CD8-positive, alpha-beta T cell (primary cell): ENCODE measurements at regions of chr9 and their contacts with region 1.

Region 1: DNA sequence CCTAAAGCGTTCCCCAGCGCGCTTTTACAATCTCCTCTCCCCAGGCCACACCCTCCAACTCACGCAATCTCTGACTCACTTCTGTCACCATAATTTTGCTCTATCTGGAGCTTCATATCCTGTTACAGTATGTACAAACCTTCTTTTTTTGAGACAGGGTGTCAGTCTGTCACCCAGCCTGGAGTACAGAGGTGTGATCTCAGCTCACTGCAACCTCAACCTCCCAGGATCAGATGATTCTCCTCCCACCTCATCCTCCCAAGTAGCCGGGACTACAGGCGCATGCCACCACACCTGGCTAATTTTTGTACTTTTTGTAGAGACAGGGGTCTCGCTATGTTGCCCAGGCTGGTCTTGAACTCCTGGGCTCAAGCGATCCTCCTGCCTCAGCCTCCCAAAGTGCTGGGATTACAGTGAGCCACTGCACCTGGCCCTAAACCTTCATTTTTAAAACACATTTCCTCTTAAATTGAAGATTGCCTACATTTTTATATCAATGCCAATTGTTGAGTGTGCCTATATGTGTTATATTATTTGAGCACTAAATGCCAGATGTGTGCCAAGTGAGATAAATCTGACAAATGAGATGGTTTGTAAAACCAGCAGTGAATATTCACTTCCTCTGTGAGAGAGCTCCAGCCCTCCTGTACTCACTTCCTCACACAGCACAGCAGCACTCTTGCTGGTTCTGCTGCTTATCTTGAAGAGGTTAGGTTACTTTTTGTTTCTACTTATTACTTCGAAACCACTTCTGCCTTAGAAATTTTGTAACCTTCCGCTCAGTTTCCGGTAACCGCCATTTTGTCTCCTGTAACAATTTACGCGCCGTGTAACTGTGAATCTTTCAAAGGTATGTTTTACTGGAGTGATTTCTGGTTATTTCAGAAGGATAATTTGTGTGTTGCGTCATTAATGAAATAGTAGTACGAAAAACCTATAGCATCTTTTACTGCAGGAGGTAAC is 57.9 kb downstream of the DOCK8 start:
- DNase-seq: peak; percentile 52 to 94 (median 71)
- ATAC-seq: peak; percentile 85
- H3K4me3 ChIP-seq: peak overlapping the region; percentile 59 to 70
- H3K4me3 Mint-ChIP-seq: peak overlapping the region; percentile 91
- H3K27ac ChIP-seq: peak overlapping the region; percentile 84 to 94
- H3K27ac Mint-ChIP-seq: peak overlapping the region; percentile 99
- H3K4me1 ChIP-seq: peaks cover 44% of the 10 kb centered on the region
- H3K4me1 Mint-ChIP-seq: peaks cover 55% of the 10 kb centered on the region
- H3K27me3 ChIP-seq: no peaks in the 10 kb centered on the region
- H3K27me3 Mint-ChIP-seq: no peaks in the 10 kb centered on the region
- CTCF ChIP-seq: no peak

Region 2: GRCh38 chr9:214648-215493 is 57.7 kb before region 1 on chr9 and contains the start of gene DOCK8:
- CTCF ChIA-PET with region 1: interaction called, 7 read pairs
- POLR2A ChIA-PET with region 1: interaction called, 15 read pairs
- intact Hi-C with region 1: loop called (anchors 1 to 2 kb)
- DNase-seq: peak; percentile 19 to 77 (median 53)
- ATAC-seq: peak; percentile 73
- H3K4me3 ChIP-seq: peak within 1 kb of the TSS; percentile 58 to 72
- H3K4me3 Mint-ChIP-seq: peak within 1 kb of the TSS; percentile 86
- H3K27ac ChIP-seq: peak within 1 kb of the TSS; percentile 19 to 44
- H3K27ac Mint-ChIP-seq: no peak within 1 kb of the TSS
- H3K4me1 ChIP-seq: peaks cover 10% of the 10 kb centered on the region
- H3K4me1 Mint-ChIP-seq: peaks cover 7% of the 10 kb centered on the region
- H3K27me3 ChIP-seq: no peaks in the 10 kb centered on the region
- H3K27me3 Mint-ChIP-seq: peaks cover 15% of the 10 kb centered on the region
- CTCF ChIP-seq: no peak
- total RNA-seq, gene DOCK8: 104 to 116 TPM

Region 3: DNA sequence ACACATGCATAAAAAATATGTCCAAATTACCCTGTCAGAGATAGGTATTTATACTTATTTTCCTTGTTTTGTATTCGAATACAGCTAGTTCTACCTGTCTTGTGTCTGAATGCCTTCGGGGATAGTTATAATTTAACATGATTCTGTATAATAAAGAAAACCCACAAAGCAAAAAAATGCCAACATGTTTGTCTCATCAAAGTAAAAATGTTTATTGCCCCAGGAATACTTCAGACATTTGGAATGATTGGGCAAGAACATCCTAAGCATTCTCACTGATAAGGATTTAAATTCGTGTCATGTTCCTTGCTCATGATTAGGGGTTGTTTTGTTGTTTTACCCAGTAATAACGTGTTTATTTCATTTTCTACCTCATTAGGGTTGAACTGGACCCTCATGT is 16.6 kb after region 1 on chr9:
- CTCF ChIA-PET with region 1: interaction called, 3 read pairs
- POLR2A ChIA-PET with region 1: interaction called, 3 read pairs
- intact Hi-C with region 1: loop called in 1 of 2 experiments (anchors 2 kb)
- DNase-seq: no peak
- ATAC-seq: no peak
- H3K4me3 ChIP-seq: no peak overlapping the region
- H3K4me3 Mint-ChIP-seq: no peak overlapping the region
- H3K27ac ChIP-seq: no peak overlapping the region
- H3K27ac Mint-ChIP-seq: no peak overlapping the region
- H3K4me1 ChIP-seq: peaks cover 12% of the 10 kb centered on the region
- H3K4me1 Mint-ChIP-seq: peaks cover 76% of the 10 kb centered on the region
- H3K27me3 ChIP-seq: no peaks in the 10 kb centered on the region
- H3K27me3 Mint-ChIP-seq: no peaks in the 10 kb centered on the region
- CTCF ChIP-seq: no peak

Region 4: GRCh38 chr9:459491-460444 is 187.2 kb after region 1 on chr9:
- CTCF ChIA-PET with region 1: no interaction called
- POLR2A ChIA-PET with region 1: no interaction called
- intact Hi-C with region 1: no loop called
- DNase-seq: peak in 2 of 9 experiments; percentile 38 to 64
- ATAC-seq: peak; percentile 66
- H3K4me3 ChIP-seq: no peak overlapping the region
- H3K4me3 Mint-ChIP-seq: no peak overlapping the region
- H3K27ac ChIP-seq: peak overlapping the region in 1 of 2 experiments; percentile 64
- H3K27ac Mint-ChIP-seq: peak overlapping the region; percentile 85
- H3K4me1 ChIP-seq: peaks cover 6% of the 10 kb centered on the region
- H3K4me1 Mint-ChIP-seq: peaks cover 9% of the 10 kb centered on the region
- H3K27me3 ChIP-seq: no peaks in the 10 kb centered on the region
- H3K27me3 Mint-ChIP-seq: no peaks in the 10 kb centered on the region
- CTCF ChIP-seq: no peak